ENCODE measurements at regions of chr6 and their contacts with region 1.

Region 1: DNA sequence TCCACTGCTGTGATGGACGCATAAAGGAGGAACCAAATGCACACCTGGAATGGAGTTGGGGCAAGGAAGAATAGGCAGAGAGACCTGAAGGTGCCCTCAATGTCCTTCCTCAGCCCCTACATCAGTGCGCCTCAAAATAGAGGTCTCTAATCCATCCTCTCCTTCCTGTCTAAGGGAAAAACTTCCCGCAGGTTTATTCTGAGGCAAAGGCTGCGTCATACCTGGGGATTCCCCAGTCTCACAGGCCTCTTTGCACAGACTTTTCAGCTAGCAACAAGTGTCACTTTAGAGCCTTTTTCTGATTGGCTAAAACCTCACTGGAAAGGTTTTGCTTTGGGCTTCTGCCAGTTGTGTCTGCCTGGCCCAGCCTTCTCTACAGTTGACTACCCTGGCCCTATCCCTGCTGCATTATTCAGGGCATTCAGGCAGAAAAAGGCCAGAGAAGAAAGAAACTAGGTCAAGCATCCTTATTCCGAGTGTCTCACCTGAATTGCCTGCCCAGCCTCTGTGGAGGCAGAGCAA is 1.8 kb upstream of the HLA-DQB1 start:
- DNase-seq: peak; percentile 73
- H3K4me3 Mint-ChIP-seq: no peak overlapping the region
- H3K27ac Mint-ChIP-seq: no peak overlapping the region
- H3K4me1 Mint-ChIP-seq: peaks cover 45% of the 10 kb centered on the region
- H3K27me3 Mint-ChIP-seq: peaks cover 24% of the 10 kb centered on the region

Region 2: GRCh38 chr6:32685603-32686002 is 17.3 kb after region 1 on chr6:
- CTCF ChIA-PET with region 1: no interaction called
- POLR2A ChIA-PET with region 1: no interaction called
- intact Hi-C with region 1: loop called (anchors 2 kb)
- DNase-seq: peak; percentile 22
- H3K4me3 Mint-ChIP-seq: no peak overlapping the region
- H3K27ac Mint-ChIP-seq: peak overlapping the region; percentile 50
- H3K4me1 Mint-ChIP-seq: peaks cover 19% of the 10 kb centered on the region
- H3K27me3 Mint-ChIP-seq: peaks cover 1% of the 10 kb centered on the region